HepG2 (cell line): ENCODE measurements at regions of chr12 and their contacts with region 1.

Region 1: DNA sequence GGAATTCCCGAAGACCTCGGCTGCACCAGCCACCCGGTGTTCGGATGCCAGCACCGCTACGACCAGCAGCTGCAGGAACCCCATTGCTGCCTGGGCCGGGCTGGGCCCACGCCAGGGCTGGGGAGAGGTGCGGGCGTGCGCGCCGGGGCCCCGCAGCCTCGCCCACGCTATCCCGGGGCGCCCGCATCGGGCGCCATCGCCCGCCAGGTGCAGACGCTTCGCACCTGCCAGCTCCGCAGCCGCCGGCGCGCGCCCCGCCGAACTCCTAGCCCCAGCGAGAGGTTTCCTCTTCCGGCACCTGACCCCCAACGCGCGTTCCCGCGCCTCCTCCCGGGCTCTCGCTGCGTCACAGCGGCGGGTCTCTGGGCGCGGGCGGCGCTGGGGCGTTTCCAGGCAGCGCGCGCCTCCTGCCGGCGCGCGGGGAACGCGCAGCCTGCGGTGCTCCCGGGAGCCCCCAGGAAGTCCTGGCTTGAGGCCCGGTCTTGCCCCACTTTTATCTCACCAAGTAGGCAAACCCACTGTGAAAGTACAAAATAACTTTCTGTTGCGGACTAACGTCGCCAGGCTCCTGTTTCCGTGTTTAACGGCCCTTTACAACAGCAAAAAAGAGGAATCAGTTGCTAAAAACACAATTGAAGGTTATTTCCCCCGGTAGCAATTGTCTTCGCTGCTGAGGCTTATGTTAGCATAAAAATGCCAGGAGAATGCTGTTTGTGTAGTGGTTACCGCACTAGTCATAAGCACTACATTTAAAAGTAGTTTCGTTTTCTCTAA is at the start of gene TM7SF3:
- DNase-seq: peak; percentile 83
- ATAC-seq: peak; percentile 91
- H3K4me3 ChIP-seq: peak within 1 kb of the TSS; percentile 77 to 90 (median 81)
- H3K27ac ChIP-seq: peak within 1 kb of the TSS; percentile 73
- H3K4me1 ChIP-seq: peaks cover 67% of the 10 kb centered on the region
- H3K27me3 ChIP-seq: no peaks in the 10 kb centered on the region; a peak in 1 of 5 replicates
- CTCF ChIP-seq: peak; percentile 85
- EP300 ChIP-seq: 0 out of 4 replicates have a peak, but pooled peaks of 1 of the 2 experiments have one; percentile 37
- POLR2A ChIP-seq: peak; percentile 76 to 79
- RAD21 ChIP-seq: peak; percentile 97
- total RNA-seq, gene TM7SF3: 94.4 and 116 TPM in 2 replicates

Region 2: GRCh38 chr12:26853303-26854030 is 160.8 kb before region 1 on chr12:
- CTCF ChIA-PET with region 1: interaction called, 3 read pairs
- POLR2A ChIA-PET with region 1: no interaction called
- in situ Hi-C with region 1: no loop called
- intact Hi-C with region 1: loop called (anchors 1 kb)
- DNase-seq: peak; percentile 58
- ATAC-seq: peak; percentile 94
- H3K4me3 ChIP-seq: peak overlapping the region; percentile 27 to 51 (median 49); a peak in 5 of 6 replicates
- H3K27ac ChIP-seq: no peak overlapping the region
- H3K4me1 ChIP-seq: peaks cover 35% of the 10 kb centered on the region
- H3K27me3 ChIP-seq: no peaks in the 10 kb centered on the region
- CTCF ChIP-seq: peak; percentile 85
- EP300 ChIP-seq: peak in 1 of 2 experiments; percentile 69; a peak in 2 of 4 replicates
- POLR2A ChIP-seq: no peak
- RAD21 ChIP-seq: peak; percentile 70

Region 3: DNA sequence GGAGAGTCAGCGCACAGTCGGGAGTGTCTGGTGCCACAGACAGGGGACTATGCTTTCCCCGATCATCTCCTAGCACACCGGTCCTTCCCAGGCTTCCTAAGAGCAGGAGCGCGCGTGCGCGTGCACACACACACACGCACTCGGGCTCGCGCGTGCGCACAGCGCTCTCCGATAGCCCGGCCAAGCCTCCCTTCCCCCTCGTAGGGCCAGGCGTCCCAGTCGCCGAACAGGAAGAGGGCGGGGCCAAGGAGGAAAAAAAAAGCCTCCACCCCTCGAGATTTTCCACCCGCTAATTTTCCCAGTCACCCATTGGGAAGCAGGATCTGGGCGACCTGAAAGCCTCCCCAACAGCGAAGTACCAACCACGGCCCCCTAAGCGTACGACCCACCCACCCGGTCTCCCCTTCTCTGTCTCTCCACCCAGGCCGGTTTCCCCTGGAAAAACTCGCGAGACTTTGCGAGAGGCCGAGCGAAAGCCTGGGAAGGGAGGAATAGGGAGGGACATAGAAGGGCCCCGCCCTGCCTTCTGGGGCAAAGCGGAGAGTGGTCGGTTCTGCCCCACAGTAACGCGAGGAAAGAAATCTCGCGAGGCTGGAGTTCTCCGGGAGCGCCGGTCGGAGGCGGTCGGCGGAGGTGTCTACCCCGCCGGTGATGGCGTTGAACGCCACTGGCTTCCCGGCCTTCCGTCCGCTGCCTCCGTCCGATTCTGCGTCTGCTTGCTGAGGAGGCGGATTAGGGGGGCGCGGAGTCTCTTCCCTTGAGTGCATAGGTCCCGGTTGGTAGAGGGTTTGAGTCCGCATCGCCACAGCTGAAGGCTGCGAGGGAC is 76.2 kb before region 1 on chr12 and contains the starts of genes FGFR1OP2 and INTS13:
- CTCF ChIA-PET with region 1: no interaction called
- POLR2A ChIA-PET with region 1: no interaction called
- in situ Hi-C with region 1: loop called (anchors 5 kb)
- intact Hi-C with region 1: loop called (anchors 1 kb)
- DNase-seq: peak; percentile 98
- ATAC-seq: peak; percentile 97
- H3K4me3 ChIP-seq: peak within 1 kb of the TSS; percentile 88 to 99 (median 91)
- H3K27ac ChIP-seq: peak within 1 kb of the TSS; percentile 92
- H3K4me1 ChIP-seq: peaks cover 43% of the 10 kb centered on the region
- H3K27me3 ChIP-seq: no peaks in the 10 kb centered on the region; a peak in 1 of 5 replicates
- CTCF ChIP-seq: peak; percentile 17
- EP300 ChIP-seq: no peak
- POLR2A ChIP-seq: peak; percentile 96 to 97
- RAD21 ChIP-seq: 0 out of 2 replicates have a peak, but pooled peaks have one; percentile 19
- total RNA-seq, gene FGFR1OP2: 38.1 and 47.3 TPM in 2 replicates
- total RNA-seq, gene INTS13: 43.7 and 62.3 TPM in 2 replicates

Region 4: GRCh38 chr12:26963413-26963812 is 50.9 kb before region 1 on chr12:
- CTCF ChIA-PET with region 1: no interaction called
- POLR2A ChIA-PET with region 1: no interaction called
- in situ Hi-C with region 1: no loop called
- intact Hi-C with region 1: no loop called
- DNase-seq: no peak
- ATAC-seq: no peak
- H3K4me3 ChIP-seq: no peak overlapping the region
- H3K27ac ChIP-seq: no peak overlapping the region
- H3K4me1 ChIP-seq: no peaks in the 10 kb centered on the region
- H3K27me3 ChIP-seq: no peaks in the 10 kb centered on the region
- CTCF ChIP-seq: no peak
- EP300 ChIP-seq: no peak
- POLR2A ChIP-seq: no peak
- RAD21 ChIP-seq: no peak

Region 5: GRCh38 chr12:27003421-27004381 is 10.6 kb before region 1 on chr12:
- CTCF ChIA-PET with region 1: no interaction called
- POLR2A ChIA-PET with region 1: no interaction called
- in situ Hi-C with region 1: no loop called
- intact Hi-C with region 1: loop called (anchors 1 kb)
- DNase-seq: no peak
- ATAC-seq: no peak
- H3K4me3 ChIP-seq: no peak overlapping the region
- H3K27ac ChIP-seq: no peak overlapping the region
- H3K4me1 ChIP-seq: peaks cover 50% of the 10 kb centered on the region
- H3K27me3 ChIP-seq: no peaks in the 10 kb centered on the region
- CTCF ChIP-seq: no peak
- EP300 ChIP-seq: no peak
- POLR2A ChIP-seq: no peak
- RAD21 ChIP-seq: no peak

Region 6: DNA sequence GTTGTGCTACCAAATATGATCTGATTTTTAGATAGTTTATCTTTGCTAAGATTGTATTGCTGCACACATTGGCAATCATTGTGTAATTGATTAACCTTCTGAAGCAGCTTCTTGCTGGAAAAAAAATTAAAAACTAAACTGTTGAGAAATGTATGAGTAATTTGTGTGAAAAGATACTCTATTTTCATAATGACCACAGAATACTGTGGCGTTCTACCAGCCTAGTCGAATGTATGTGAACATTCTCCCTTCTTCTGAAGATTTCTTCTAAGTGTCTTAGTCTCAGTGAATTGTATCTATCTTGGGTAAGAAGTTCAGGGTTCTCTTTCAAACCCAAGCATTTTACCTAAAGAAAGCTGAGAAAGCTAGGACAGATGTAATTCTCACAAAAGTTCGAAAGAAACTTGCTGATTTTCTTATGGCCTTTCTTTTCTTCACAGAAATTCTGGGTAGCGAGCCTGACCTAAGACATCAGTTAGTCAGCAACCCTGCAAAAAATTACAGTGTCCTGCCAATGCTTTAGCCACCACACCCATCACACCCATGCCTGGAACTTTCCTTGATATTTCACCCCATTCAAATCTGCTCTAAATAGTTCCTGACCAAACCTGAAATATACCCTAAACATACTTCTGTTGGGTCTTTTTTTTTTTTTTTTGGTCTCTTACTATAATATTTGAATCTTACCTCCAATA is 95.2 kb after region 1 on chr12:
- CTCF ChIA-PET with region 1: no interaction called
- POLR2A ChIA-PET with region 1: no interaction called
- in situ Hi-C with region 1: no loop called
- intact Hi-C with region 1: no loop called
- DNase-seq: no peak
- ATAC-seq: no peak
- H3K4me3 ChIP-seq: no peak overlapping the region
- H3K27ac ChIP-seq: no peak overlapping the region
- H3K4me1 ChIP-seq: peaks cover 14% of the 10 kb centered on the region
- H3K27me3 ChIP-seq: no peaks in the 10 kb centered on the region
- CTCF ChIP-seq: no peak
- EP300 ChIP-seq: no peak
- POLR2A ChIP-seq: no peak
- RAD21 ChIP-seq: no peak